AG04450 (cell line): ENCODE measurements at regions of chr1 and their contacts with region 1.

Region 1: GRCh38 chr1:36516372-36517325 is 33.9 kb upstream of the CSF3R start:
- DNase-seq: no peak
- H3K4me3 ChIP-seq: no peak overlapping the region
- H3K27ac ChIP-seq: no peak overlapping the region
- H3K27me3 ChIP-seq: peaks cover 2% of the 10 kb centered on the region
- CTCF ChIP-seq: peak; percentile 85

Region 2: DNA sequence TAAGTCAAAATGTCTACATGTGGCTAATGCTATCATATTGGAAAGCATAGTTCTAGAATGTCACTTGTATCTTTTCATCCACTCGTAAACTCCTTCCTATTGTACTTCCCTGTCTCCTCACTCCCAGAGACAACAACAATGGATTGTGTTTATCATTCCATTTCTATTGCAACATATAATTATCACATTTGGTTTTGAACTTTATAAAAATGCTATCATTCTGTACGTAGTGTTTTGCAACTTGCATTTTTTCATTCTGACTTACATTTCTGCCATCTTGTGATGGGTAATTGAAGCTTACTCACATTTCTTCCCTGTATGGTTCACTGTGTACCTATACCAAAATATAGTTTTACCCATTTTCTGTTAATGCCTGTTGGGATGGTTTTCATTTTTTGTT is 19.4 kb before region 1 on chr1:
- CTCF ChIA-PET with region 1: interaction called, 17 read pairs
- POLR2A ChIA-PET with region 1: no interaction called
- DNase-seq: no peak
- H3K4me3 ChIP-seq: no peak overlapping the region
- H3K27ac ChIP-seq: no peak overlapping the region
- H3K27me3 ChIP-seq: peaks cover 12% of the 10 kb centered on the region
- CTCF ChIP-seq: no peak